Heart right ventricle (tissue), 16 donors: ENCODE measurements at regions of chr11 and their contacts with region 1.

Region 1: DNA sequence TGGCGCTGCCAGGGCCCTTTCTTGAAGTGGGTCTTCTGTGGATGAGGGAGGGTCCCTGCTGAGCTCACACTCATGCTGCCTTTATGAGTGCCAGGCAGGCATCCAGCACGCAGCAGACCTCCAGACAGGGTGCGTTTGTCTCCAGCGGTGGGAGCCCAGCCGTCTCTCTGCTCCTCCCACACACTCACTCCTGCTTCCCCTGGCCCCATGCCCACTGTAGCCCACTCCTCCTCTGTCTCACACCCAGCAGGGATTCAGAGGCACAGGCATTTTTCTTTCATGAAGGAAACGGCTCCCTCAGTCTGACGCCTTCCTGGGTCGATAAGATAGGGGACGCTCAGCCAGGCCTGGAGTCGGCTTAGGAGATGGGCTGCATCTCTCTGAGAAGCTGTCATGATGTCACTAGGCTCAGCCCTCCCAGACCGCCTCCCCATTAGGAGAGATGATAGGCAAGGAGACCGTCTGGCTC is 183.9 kb upstream of the NCAM1 start:
- DNase-seq: no peak
- ATAC-seq: peak in 7 of 8 donors; percentile 2 to 65 (median 25)
- H3K4me3 ChIP-seq: no peak overlapping the region
- H3K27ac ChIP-seq: peak overlapping the region; percentile 47 to 86 (median 76)
- H3K4me1 ChIP-seq: peaks cover 10 to 50% (median 33%) of the 10 kb centered on the region in 9 donors
- H3K27me3 ChIP-seq: peaks cover 0 to 11% (median 0%) of the 10 kb centered on the region in 7 donors
- CTCF ChIP-seq: no peak

Region 2: GRCh38 chr11:112760396-112761059 is 16.8 kb before region 1 on chr11:
- intact Hi-C with region 1: loop called in 1 of 10 experiments (anchors 1 kb)
- DNase-seq: no peak
- ATAC-seq: peak in 1 of 8 donors; percentile 6
- H3K4me3 ChIP-seq: no peak overlapping the region
- H3K27ac ChIP-seq: peak overlapping the region in 3 of 10 donors; percentile 30 to 72 (median 60)
- H3K4me1 ChIP-seq: peaks cover 0 to 32% (median 9%) of the 10 kb centered on the region in 9 donors
- H3K27me3 ChIP-seq: peaks cover 0 to 2% (median 0%) of the 10 kb centered on the region in 7 donors
- CTCF ChIP-seq: no peak

Region 3: DNA sequence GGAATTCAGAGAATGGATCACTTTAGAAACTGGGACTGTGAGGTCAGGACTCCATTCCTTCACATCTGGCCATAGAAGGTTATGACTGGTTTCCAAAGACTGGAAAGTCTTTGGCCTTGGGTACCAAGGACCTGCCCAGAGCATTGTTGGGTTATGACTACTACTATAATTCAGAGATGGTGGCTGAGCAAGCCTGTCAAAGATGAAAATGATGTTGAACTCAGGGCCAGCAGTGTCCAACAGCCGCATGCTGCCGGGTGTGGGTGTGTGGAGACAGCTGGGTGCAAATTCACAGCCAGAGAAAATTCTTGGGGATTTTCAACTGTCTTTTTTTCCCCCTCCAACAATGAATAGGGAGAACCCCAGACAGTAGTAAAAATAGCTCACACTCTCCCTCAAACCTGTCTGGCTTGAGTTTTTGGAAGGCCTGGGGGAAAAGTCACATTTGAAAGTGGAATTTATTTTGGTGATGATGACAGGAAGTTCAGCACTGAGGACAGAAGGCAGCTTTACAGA is 17.1 kb after region 1 on chr11:
- intact Hi-C with region 1: no loop called
- DNase-seq: no peak
- ATAC-seq: peak in 3 of 8 donors; percentile 43 to 54 (median 43)
- H3K4me3 ChIP-seq: no peak overlapping the region
- H3K27ac ChIP-seq: peak overlapping the region in 3 of 10 donors; percentile 3 to 44 (median 16)
- H3K4me1 ChIP-seq: peaks cover 0 to 41% (median 12%) of the 10 kb centered on the region in 9 donors
- H3K27me3 ChIP-seq: no peaks in the 10 kb centered on the region
- CTCF ChIP-seq: no peak